Naive thymus-derived CD4-positive, alpha-beta T cell (primary cell): ENCODE measurements at regions of chr17 and their contacts with region 1.

Region 1: GRCh38 chr17:5191541-5192417 is at the start of gene ZNF594:
- DNase-seq: peak; percentile 92 to 97 (median 95)
- ATAC-seq: peak; percentile 100
- H3K4me3 ChIP-seq: peak within 1 kb of the TSS; percentile 55
- H3K4me3 Mint-ChIP-seq: peak within 1 kb of the TSS; percentile 91 to 96 (median 94)
- H3K27ac ChIP-seq: peak within 1 kb of the TSS; percentile 82
- H3K27ac Mint-ChIP-seq: peak within 1 kb of the TSS; percentile 91 to 96 (median 92)
- H3K4me1 ChIP-seq: peaks cover 9 to 13% of the 10 kb centered on the region in 2 donors
- H3K4me1 Mint-ChIP-seq: peaks cover 15 to 39% (median 30%) of the 10 kb centered on the region in 7 donors
- H3K27me3 ChIP-seq: no peaks in the 10 kb centered on the region
- H3K27me3 Mint-ChIP-seq: no peaks in the 10 kb centered on the region
- total RNA-seq, gene ZNF594: 4.8 to 35.7 (median 11.6) TPM

Region 2: DNA sequence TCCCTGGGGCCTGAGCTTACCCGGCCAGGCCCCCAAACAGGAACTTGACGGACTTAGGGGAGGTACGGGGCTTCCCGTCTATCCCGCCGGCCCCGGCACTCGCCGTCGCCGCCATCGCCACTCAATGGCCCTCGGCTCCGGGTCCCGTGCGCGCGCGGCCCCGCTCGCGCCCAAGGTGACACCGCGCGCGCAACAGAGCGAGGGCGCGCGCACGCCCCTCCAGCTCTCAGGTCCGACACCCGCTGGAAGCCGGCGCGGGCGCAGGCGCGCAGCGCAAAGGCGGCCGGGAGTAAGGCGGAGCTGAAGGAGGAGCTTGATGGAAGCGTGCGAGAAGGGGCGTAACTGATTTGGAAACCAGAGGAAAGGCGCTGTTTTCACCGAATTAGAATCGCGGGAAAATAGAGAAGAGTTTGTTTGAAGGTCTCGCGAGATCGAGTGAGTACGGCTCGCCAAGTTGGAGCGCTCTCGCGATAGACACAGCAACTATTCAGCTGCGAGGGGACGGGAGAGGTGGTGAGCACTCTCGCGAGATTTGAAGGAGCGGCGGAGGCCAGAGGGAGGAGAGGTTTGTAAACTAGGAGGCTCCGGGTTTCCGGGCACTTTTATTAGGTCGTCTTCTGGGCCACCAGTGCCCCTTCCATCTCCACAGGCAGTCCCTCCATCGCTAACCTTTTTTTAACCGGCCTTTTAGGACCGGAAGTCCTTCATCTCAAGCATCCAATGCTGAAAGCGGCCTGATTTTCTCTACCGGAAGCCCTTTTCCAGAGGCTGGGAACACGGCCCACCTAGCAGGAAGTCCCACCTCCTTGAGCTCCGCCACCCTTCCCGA is 251.8 kb before region 1 on chr17 and contains the starts of genes RNF167 and SLC25A11:
- CTCF ChIA-PET with region 1: no interaction called
- POLR2A ChIA-PET with region 1: interaction called, 3 read pairs
- intact Hi-C with region 1: loop called (anchors 10 kb)
- DNase-seq: peak; percentile 86 to 99 (median 98)
- ATAC-seq: peak; percentile 94
- H3K4me3 ChIP-seq: peak within 1 kb of the TSS; percentile 89
- H3K4me3 Mint-ChIP-seq: peak within 1 kb of the TSS; percentile 92 to 100 (median 98)
- H3K27ac ChIP-seq: peak within 1 kb of the TSS; percentile 89
- H3K27ac Mint-ChIP-seq: peak within 1 kb of the TSS; percentile 89 to 98 (median 95)
- H3K4me1 ChIP-seq: peaks cover 47 to 48% of the 10 kb centered on the region in 2 donors
- H3K4me1 Mint-ChIP-seq: peaks cover 52 to 77% (median 66%) of the 10 kb centered on the region in 7 donors
- H3K27me3 ChIP-seq: no peaks in the 10 kb centered on the region
- H3K27me3 Mint-ChIP-seq: no peaks in the 10 kb centered on the region
- total RNA-seq, gene RNF167: 97.3 to 248 (median 148) TPM
- total RNA-seq, gene SLC25A11: 27.0 to 82.6 (median 44.1) TPM

Region 3: GRCh38 chr17:5111402-5112204 is 80.2 kb before region 1 on chr17 and contains the start of gene ZNF232:
- CTCF ChIA-PET with region 1: no interaction called
- POLR2A ChIA-PET with region 1: interaction called, 5 read pairs
- intact Hi-C with region 1: loop called (anchors 2 kb)
- DNase-seq: peak; percentile 83 to 95 (median 87)
- ATAC-seq: peak; percentile 94
- H3K4me3 ChIP-seq: peak within 1 kb of the TSS; percentile 80
- H3K4me3 Mint-ChIP-seq: peak within 1 kb of the TSS; percentile 82 to 96 (median 92)
- H3K27ac ChIP-seq: peak within 1 kb of the TSS; percentile 74
- H3K27ac Mint-ChIP-seq: peak within 1 kb of the TSS; percentile 59 to 96 (median 88)
- H3K4me1 ChIP-seq: peaks cover 9% of the 10 kb centered on the region in 2 donors
- H3K4me1 Mint-ChIP-seq: peaks cover 14 to 48% (median 36%) of the 10 kb centered on the region in 7 donors
- H3K27me3 ChIP-seq: peaks cover 0 to 3% of the 10 kb centered on the region in 2 donors
- H3K27me3 Mint-ChIP-seq: peaks cover 12 to 19% (median 16%) of the 10 kb centered on the region in 5 donors
- total RNA-seq, gene ZNF232: 5.1 to 20.3 (median 11.2) TPM

Region 4: GRCh38 chr17:5237541-5238016 is 45.8 kb after region 1 on chr17:
- CTCF ChIA-PET with region 1: interaction called, 3 read pairs
- POLR2A ChIA-PET with region 1: interaction called, 8 read pairs
- intact Hi-C with region 1: loop called in 1 of 2 experiments (anchors 2 kb)
- DNase-seq: peak in 2 of 9 donors; percentile 8 to 28
- ATAC-seq: peak; percentile 55
- H3K4me3 ChIP-seq: no peak overlapping the region
- H3K4me3 Mint-ChIP-seq: peak overlapping the region in 3 of 10 donors; percentile 8 to 32 (median 28)
- H3K27ac ChIP-seq: no peak overlapping the region
- H3K27ac Mint-ChIP-seq: peak overlapping the region in 6 of 9 donors; percentile 42 to 78 (median 60)
- H3K4me1 ChIP-seq: peaks cover 22 to 40% of the 10 kb centered on the region in 2 donors
- H3K4me1 Mint-ChIP-seq: peaks cover 11 to 44% (median 36%) of the 10 kb centered on the region in 7 donors
- H3K27me3 ChIP-seq: no peaks in the 10 kb centered on the region
- H3K27me3 Mint-ChIP-seq: peaks cover 0 to 2% (median 0%) of the 10 kb centered on the region in 5 donors

Region 5: GRCh38 chr17:5419356-5419958 is 227.7 kb after region 1 on chr17 and contains the start of gene NUP88:
- CTCF ChIA-PET with region 1: no interaction called
- POLR2A ChIA-PET with region 1: interaction called, 7 read pairs
- intact Hi-C with region 1: loop called (anchors 1 to 2 kb)
- DNase-seq: peak; percentile 86 to 97 (median 95)
- ATAC-seq: peak; percentile 94
- H3K4me3 ChIP-seq: peak within 1 kb of the TSS; percentile 93
- H3K4me3 Mint-ChIP-seq: peak within 1 kb of the TSS; percentile 93 to 100 (median 98)
- H3K27ac ChIP-seq: peak within 1 kb of the TSS; percentile 94
- H3K27ac Mint-ChIP-seq: peak within 1 kb of the TSS; percentile 89 to 100 (median 99)
- H3K4me1 ChIP-seq: peaks cover 26% of the 10 kb centered on the region in 2 donors
- H3K4me1 Mint-ChIP-seq: peaks cover 16 to 56% (median 40%) of the 10 kb centered on the region in 7 donors
- H3K27me3 ChIP-seq: no peaks in the 10 kb centered on the region
- H3K27me3 Mint-ChIP-seq: peaks cover 0 to 2% (median 0%) of the 10 kb centered on the region in 5 donors
- total RNA-seq, gene NUP88: 85.7 to 135 (median 111) TPM

Region 6: GRCh38 chr17:5468075-5468473 is 276.3 kb after region 1 on chr17:
- CTCF ChIA-PET with region 1: no interaction called
- POLR2A ChIA-PET with region 1: interaction called, 3 read pairs
- intact Hi-C with region 1: loop called in 1 of 2 experiments (anchors 2 kb)
- DNase-seq: peak in 5 of 9 donors; percentile 11 to 44 (median 22)
- ATAC-seq: peak; percentile 34
- H3K4me3 ChIP-seq: peak overlapping the region; percentile 72
- H3K4me3 Mint-ChIP-seq: peak overlapping the region; percentile 83 to 95 (median 88)
- H3K27ac ChIP-seq: peak overlapping the region; percentile 68
- H3K27ac Mint-ChIP-seq: peak overlapping the region; percentile 12 to 85 (median 43)
- H3K4me1 ChIP-seq: peaks cover 11 to 12% of the 10 kb centered on the region in 2 donors
- H3K4me1 Mint-ChIP-seq: peaks cover 33 to 49% (median 43%) of the 10 kb centered on the region in 7 donors
- H3K27me3 ChIP-seq: no peaks in the 10 kb centered on the region
- H3K27me3 Mint-ChIP-seq: no peaks in the 10 kb centered on the region

Region 7: GRCh38 chr17:5584383-5585286 is 392.9 kb after region 1 on chr17 and contains the start of gene NLRP1:
- CTCF ChIA-PET with region 1: no interaction called
- POLR2A ChIA-PET with region 1: no interaction called
- intact Hi-C with region 1: loop called in 1 of 2 experiments (anchors 10 kb)
- DNase-seq: peak; percentile 78 to 97 (median 95)
- ATAC-seq: peak; percentile 96
- H3K4me3 ChIP-seq: peak within 1 kb of the TSS; percentile 97
- H3K4me3 Mint-ChIP-seq: peak within 1 kb of the TSS; percentile 94 to 100 (median 98)
- H3K27ac ChIP-seq: peak within 1 kb of the TSS; percentile 94
- H3K27ac Mint-ChIP-seq: peak within 1 kb of the TSS; percentile 90 to 100 (median 99)
- H3K4me1 ChIP-seq: peaks cover 44 to 67% of the 10 kb centered on the region in 2 donors
- H3K4me1 Mint-ChIP-seq: peaks cover 43 to 74% (median 63%) of the 10 kb centered on the region in 7 donors
- H3K27me3 ChIP-seq: no peaks in the 10 kb centered on the region
- H3K27me3 Mint-ChIP-seq: peaks cover 0 to 12% (median 0%) of the 10 kb centered on the region in 5 donors
- total RNA-seq, gene NLRP1: 86.6 to 360 (median 259) TPM